ENCODE measurements at regions of chr2 and their contacts with region 1.

Region 1: DNA sequence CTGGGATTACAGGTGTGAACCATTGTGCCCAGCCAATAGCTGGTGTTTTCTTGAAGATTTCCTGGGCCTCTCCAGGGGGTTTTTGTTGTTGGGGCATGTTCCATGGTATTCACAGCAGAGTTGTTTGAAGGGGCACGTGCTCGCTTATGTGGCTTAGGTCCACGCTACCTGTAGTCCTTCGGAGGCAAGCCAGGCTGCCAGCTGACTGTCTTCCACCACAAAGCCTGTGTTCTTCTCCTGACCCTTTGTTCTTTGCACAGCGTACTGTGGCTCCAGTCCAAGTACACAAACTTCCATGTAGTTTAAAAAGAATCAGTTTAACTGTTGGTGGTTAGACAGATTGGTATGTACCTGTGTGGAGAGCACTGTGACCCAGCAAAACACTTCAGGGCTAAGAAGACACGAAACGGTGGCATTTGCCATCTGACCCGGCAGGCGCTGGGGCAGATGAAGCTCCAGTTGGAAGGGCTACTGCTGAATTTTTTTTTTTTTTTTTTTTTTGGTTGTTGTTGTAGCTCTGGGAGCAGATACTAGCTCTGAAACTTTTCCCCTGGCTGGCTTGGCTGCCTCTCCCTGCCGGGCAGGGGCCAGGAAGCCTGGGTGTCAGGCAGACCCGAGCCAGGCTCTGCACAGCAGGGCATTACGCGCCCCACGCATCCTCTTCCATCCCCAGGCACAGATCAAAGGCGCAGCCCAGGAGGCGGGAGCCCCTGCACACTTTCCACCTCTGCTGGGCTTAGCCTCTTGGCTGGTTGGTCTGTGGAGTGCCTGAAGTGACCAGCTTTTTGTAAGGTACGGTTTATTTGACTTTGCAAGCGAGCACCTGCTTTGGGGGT is 5.7 kb downstream of the GREB1 start:
- DNase-seq: peak; percentile 96
- ATAC-seq: peak; percentile 81
- H3K4me3 ChIP-seq: peak overlapping the region; percentile 54 to 72 (median 72)
- H3K27ac ChIP-seq: peak overlapping the region; percentile 88
- H3K4me1 ChIP-seq: peaks cover 96% of the 10 kb centered on the region
- H3K27me3 ChIP-seq: no peaks in the 10 kb centered on the region
- CTCF ChIP-seq: no peak
- EP300 ChIP-seq: peak in 1 of 2 experiments; percentile 85; a peak in 2 of 4 replicates
- POLR2A ChIP-seq: peak; percentile 67 to 76
- RAD21 ChIP-seq: 0 out of 2 replicates have a peak, but pooled peaks have one; percentile 7

Region 2: DNA sequence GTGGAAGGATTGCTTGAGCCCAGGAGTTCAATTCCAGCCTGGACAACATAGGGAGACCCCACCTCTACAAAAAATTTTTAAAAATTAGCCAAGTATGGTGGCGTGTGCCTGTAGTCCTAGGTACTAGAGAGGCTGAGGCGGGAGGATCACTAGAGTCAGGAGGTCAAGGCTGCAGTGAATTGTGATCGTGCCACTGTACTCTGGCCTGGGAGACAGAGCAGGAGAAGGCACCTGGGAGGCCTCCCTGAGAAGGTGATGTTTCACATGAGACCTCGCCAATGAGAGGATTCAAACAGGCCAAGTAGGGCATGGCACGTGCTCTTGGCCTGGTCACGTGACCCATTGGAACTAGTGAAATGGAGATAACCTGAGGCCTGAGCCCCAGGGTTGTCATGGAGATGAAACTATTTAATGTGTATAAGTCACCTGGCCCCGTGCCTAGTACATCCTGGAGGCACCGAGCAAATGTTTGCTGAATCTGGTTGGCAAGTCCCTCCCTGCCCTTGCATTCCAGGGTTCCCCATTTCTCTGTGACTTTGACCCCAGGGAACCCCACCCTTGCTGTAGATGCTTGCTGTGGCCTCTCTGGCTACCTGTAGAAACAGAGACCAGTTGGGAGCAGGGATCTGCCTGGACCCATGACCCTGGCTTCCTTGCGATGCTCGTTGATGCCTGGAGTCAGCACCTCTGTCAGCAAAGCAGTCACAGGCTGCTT is 169.0 kb before region 1 on chr2:
- CTCF ChIA-PET with region 1: no interaction called
- POLR2A ChIA-PET with region 1: no interaction called
- in situ Hi-C with region 1: no loop called
- intact Hi-C with region 1: loop called (anchors 10 kb)
- DNase-seq: peak; percentile 99
- ATAC-seq: peak; percentile 75
- H3K4me3 ChIP-seq: peak overlapping the region in 1 of 3 experiments; percentile 8; a peak in 1 of 6 replicates
- H3K27ac ChIP-seq: peak overlapping the region; percentile 58
- H3K4me1 ChIP-seq: peaks cover 100% of the 10 kb centered on the region
- H3K27me3 ChIP-seq: no peaks in the 10 kb centered on the region
- CTCF ChIP-seq: no peak
- EP300 ChIP-seq: peak; percentile 83; a peak in 3 of 4 replicates
- POLR2A ChIP-seq: no peak; a peak in 1 of 4 replicates
- RAD21 ChIP-seq: peak; percentile 41

Region 3: GRCh38 chr2:11477994-11478393 is 61.5 kb before region 1 on chr2:
- CTCF ChIA-PET with region 1: interaction called, 12 read pairs
- POLR2A ChIA-PET with region 1: interaction called, 24 read pairs
- in situ Hi-C with region 1: no loop called
- intact Hi-C with region 1: loop called (anchors 1 kb)
- DNase-seq: peak; percentile 90
- ATAC-seq: peak; percentile 66
- H3K4me3 ChIP-seq: no peak overlapping the region
- H3K27ac ChIP-seq: no peak overlapping the region
- H3K4me1 ChIP-seq: peaks cover 52% of the 10 kb centered on the region
- H3K27me3 ChIP-seq: no peaks in the 10 kb centered on the region
- CTCF ChIP-seq: peak; percentile 95
- EP300 ChIP-seq: peak in 1 of 2 experiments; percentile 17; a peak in 1 of 4 replicates
- POLR2A ChIP-seq: no peak
- RAD21 ChIP-seq: peak; percentile 97

Region 4: DNA sequence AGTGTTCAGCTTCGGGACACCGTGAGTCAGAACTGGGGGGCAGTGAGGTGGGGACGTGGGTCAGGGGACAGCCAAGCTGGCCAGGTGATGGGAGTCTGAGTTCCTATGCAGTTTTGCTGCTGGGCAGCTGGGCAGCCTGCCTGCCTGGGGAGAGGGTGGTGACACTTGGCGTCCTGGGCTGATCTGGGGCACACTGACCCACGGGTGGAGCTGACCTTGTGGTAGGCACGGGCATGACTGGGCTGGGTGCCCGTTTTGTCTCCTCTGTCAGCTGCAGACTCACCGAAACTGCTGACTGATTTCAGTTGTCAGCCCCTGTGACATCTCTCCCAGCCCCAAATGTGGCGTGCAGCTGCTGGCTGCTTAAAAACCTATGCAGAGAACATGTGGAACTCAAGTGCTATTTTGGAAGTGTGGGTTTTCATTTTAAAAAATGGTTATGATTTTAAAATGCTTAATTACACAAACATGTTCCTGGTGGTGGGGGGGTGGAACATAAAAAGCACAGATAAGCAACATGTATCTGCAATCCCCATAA is 40.9 kb before region 1 on chr2:
- CTCF ChIA-PET with region 1: no interaction called
- POLR2A ChIA-PET with region 1: interaction called, 102 read pairs
- in situ Hi-C with region 1: loop called (anchors 5 kb)
- intact Hi-C with region 1: loop called (anchors 1 kb)
- DNase-seq: peak; percentile 80
- ATAC-seq: peak; percentile 66
- H3K4me3 ChIP-seq: peak overlapping the region; percentile 35 to 70 (median 46)
- H3K27ac ChIP-seq: peak overlapping the region; percentile 98
- H3K4me1 ChIP-seq: peaks cover 97% of the 10 kb centered on the region
- H3K27me3 ChIP-seq: no peaks in the 10 kb centered on the region
- CTCF ChIP-seq: no peak
- EP300 ChIP-seq: no peak
- POLR2A ChIP-seq: peak; percentile 66 to 82; a peak in 3 of 4 replicates
- RAD21 ChIP-seq: 0 out of 2 replicates have a peak, but pooled peaks have one; percentile 20

Region 5: GRCh38 chr2:11505652-11506610 is 33.6 kb before region 1 on chr2:
- CTCF ChIA-PET with region 1: no interaction called
- POLR2A ChIA-PET with region 1: interaction called, 102 read pairs
- in situ Hi-C with region 1: no loop called
- intact Hi-C with region 1: loop called (anchors 2 kb)
- DNase-seq: peak; percentile 97
- ATAC-seq: peak; percentile 91
- H3K4me3 ChIP-seq: peak overlapping the region; percentile 3 to 51 (median 4); a peak in 2 of 6 replicates
- H3K27ac ChIP-seq: peak overlapping the region; percentile 97
- H3K4me1 ChIP-seq: peaks cover 98% of the 10 kb centered on the region
- H3K27me3 ChIP-seq: no peaks in the 10 kb centered on the region
- CTCF ChIP-seq: no peak
- EP300 ChIP-seq: peak; percentile 53 to 89; a peak in 3 of 4 replicates
- POLR2A ChIP-seq: peak; percentile 57 to 62
- RAD21 ChIP-seq: peak; percentile 32; the same call in 1 of the 2 replicates

Region 6: DNA sequence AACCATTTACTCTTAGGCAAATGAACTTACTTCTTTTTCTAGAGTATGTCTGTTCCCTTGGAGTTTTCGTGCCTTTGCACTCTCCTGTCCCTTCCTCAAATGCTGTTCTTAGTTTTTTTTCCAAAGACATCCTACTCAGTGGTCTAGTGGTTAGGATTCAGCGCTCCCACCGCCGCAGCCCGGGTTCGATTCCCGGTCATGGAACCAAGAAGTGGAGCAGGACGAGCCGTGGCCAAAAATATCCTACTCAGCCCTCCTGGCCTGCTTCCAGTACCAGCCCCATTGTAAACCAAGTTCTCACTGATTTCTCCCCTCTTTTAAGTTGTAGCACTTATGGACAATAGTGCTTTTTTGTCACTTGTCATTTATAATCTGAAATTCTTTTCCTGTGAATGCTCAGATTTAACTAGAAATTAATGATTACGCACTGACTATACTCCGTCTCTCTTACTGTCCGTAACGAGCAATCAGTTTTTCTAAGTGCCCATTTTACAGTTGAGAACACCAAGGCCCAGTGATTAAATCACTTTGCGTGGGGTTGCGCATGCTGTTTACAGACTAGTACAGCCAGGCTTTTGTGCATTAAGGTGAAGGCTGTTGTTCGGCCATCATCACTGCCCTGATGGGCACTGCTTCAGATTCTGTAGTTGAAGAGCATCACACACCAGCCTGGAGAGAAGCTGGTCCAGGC is 12.2 kb after region 1 on chr2:
- CTCF ChIA-PET with region 1: no interaction called
- POLR2A ChIA-PET with region 1: interaction called, 24 read pairs
- in situ Hi-C with region 1: no loop called
- intact Hi-C with region 1: no loop called
- DNase-seq: no peak
- ATAC-seq: no peak
- H3K4me3 ChIP-seq: no peak overlapping the region
- H3K27ac ChIP-seq: no peak overlapping the region
- H3K4me1 ChIP-seq: peaks cover 75% of the 10 kb centered on the region
- H3K27me3 ChIP-seq: no peaks in the 10 kb centered on the region
- CTCF ChIP-seq: no peak
- EP300 ChIP-seq: no peak
- POLR2A ChIP-seq: no peak
- RAD21 ChIP-seq: no peak